ENCODE measurements at regions of chr6 and their contacts with region 1.

Region 1: DNA sequence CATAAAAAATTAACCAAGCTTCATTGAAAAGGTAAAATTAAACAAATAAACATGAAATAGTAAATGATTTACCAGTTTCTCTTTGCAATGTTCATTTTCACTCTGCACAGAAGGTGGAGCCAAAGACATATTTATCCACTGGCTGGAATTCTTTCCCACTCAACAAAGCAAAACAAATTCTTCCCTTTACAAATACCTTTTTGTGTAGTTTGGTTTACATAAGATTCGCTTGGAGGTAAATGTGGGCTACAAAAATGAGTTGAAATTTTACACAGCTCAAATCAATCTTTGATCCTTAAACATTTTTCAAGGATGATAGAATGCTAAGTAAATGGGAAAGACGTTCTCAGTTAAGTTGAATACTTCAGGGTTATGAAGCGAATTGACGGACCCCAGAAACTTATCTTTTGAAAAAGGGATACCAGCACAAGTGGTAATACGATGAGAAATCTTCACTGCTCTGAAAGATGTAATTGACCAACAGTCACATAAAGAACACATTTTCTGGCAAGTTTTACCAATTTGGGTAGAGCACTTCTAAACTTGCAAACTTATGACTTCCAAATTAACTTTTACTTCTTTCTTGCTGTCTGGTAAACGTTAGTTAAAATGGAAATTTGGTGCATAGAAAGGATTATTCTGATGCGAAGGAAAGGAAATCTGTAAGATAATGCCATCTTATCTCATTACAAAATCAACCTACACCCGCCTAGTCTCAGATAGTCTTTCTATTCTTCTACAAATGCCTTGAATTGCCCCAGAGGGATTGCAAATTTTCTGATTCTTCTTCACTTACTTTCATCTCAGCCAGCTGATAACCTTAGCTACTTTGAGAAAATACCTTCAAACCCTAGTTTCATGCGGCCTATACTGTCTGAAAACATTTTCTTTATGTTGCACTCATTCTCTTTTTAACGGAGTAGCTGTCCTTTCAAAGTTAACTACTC is 4.7 kb upstream of the GJA1 start:
- DNase-seq: peak; percentile 72
- H3K4me3 ChIP-seq: no peak overlapping the region
- H3K27ac ChIP-seq: no peak overlapping the region
- H3K4me1 ChIP-seq: peaks cover 5% of the 10 kb centered on the region; the same call in 1 of the 2 replicates
- H3K27me3 ChIP-seq: no peaks in the 10 kb centered on the region

Region 2: DNA sequence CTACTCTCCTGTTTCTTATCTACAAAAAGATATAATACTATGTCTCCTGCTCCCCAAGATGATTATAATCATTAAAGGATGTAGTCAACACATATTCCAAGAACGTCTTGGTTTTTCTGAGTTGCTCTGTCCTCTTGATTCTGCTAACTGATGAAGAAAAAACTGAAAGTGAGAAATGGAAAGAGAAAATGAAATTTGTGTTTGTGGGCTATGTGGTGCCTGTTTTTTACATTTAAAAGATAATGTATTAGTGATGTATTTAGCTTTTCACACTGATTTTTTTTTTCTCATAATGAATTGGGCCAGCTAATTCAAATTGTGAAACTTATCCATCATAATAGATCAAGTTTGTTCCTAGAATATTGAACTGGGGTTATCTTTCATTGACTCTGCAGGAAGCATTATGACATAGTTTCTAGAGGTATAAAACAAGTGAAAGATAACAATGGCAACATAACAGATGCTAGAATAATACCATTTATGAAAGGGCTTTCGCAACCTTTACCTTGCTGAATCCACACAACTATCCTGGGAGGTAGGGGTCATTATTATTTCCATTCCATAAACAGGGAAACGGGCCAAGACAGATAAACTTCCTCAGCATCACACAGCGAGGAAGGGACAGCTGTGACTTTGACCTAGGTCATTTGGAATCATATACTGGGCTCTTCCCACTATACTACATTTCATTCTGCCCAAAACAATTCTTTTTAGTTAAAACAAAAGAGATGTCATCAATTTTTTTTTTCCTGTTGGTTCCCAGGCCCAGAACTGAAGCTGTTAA is 341.3 kb after region 1 on chr6:
- in situ Hi-C with region 1: no loop called
- DNase-seq: no peak
- H3K4me3 ChIP-seq: no peak overlapping the region
- H3K27ac ChIP-seq: no peak overlapping the region
- H3K4me1 ChIP-seq: no peaks in the 10 kb centered on the region
- H3K27me3 ChIP-seq: no peaks in the 10 kb centered on the region

Region 3: DNA sequence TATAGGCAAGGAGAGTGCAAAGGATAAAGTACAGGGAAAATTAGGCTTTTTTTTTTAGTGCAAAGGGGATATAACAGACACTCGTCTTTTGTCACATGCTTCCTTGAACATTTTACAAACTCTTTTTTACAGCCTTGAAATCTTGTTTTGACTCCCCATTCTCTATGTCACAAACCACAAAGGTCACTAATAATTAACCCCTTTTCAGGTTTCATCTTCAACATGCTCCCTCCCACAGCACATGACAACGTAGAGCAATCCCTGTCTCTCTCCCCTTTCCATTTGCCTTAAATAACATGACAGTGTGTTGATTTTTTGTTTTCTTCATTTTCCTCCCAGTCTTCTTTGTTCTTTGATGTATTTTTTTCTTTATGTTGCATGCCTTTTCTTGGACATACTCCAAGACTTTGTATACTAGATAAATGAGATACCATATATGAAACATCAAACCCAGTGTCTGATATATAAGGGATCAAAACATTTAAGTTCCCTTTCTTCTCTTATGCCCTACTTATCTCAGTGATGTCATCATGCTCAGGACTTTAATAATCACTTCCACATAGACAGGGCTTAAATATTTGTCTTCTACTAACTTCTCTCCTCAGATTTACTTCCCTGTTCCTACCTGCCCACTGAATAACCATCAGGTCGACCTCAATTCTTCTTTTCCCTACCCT is 589.9 kb after region 1 on chr6:
- in situ Hi-C with region 1: loop called (anchors 10 kb)
- DNase-seq: no peak
- H3K4me3 ChIP-seq: no peak overlapping the region
- H3K27ac ChIP-seq: no peak overlapping the region
- H3K4me1 ChIP-seq: peaks cover under 1% of the 10 kb centered on the region
- H3K27me3 ChIP-seq: no peaks in the 10 kb centered on the region

Region 4: DNA sequence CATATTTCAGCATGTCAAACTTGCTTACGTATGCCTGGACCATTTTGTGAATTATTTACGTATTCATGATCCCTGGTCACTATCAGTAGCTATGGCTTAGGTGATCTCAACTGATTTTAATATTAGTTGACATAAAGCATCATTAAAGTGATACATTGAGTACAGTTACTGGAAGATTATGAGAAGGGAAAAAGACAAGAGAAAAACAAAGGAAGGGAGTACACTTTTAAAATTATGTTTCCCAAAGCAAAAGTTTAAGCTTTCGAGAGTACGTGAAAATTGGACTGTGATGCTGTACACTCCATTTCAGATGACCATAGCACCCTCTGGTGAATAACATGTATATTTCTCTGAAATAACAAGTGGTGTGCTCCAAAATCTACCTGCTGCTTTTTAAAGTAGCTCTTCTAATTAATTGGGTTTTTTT is 753.6 kb after region 1 on chr6:
- in situ Hi-C with region 1: loop called (anchors 5 kb)
- DNase-seq: peak; percentile 67
- H3K4me3 ChIP-seq: peak overlapping the region; percentile 52
- H3K27ac ChIP-seq: no peak overlapping the region
- H3K4me1 ChIP-seq: no peaks in the 10 kb centered on the region
- H3K27me3 ChIP-seq: no peaks in the 10 kb centered on the region

Region 5: GRCh38 chr6:122372647-122373046 is 941.9 kb after region 1 on chr6:
- in situ Hi-C with region 1: no loop called
- DNase-seq: peak; percentile 19
- H3K4me3 ChIP-seq: no peak overlapping the region
- H3K27ac ChIP-seq: no peak overlapping the region
- H3K4me1 ChIP-seq: no peaks in the 10 kb centered on the region
- H3K27me3 ChIP-seq: peaks cover 7% of the 10 kb centered on the region; the same call in 1 of the 2 replicates

Measured in GM23248 (cell line).